AG04450 (cell line): ENCODE measurements at regions of chr12 and their contacts with region 1.

Region 1: DNA sequence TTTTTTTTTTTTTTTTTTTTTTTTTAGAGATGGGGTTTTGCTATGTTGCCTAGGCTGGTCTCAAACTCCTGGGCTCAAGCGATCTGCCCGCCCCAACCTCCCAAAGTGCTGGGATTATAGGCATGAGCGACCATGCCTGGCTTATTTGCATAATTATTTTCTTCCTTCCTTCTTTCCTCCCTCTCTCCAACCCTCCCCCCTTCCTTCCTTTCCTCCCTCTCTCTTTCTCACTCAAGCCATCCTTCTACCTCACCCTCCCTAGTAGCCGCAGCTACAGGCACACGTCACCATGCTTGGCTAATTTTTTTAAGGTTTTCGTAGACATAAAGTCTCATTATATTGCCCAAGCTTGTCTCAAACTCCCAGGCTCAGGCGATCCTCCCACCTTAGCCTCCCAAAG is 83.8 kb downstream of the PEBP1 start:
- DNase-seq: no peak
- H3K4me3 ChIP-seq: no peak overlapping the region
- H3K27ac ChIP-seq: no peak overlapping the region
- H3K27me3 ChIP-seq: no peaks in the 10 kb centered on the region
- CTCF ChIP-seq: no peak

Region 2: GRCh38 chr12:118377884-118378470 is 158.2 kb after region 1 on chr12:
- CTCF ChIA-PET with region 1: interaction called, 14 read pairs
- POLR2A ChIA-PET with region 1: interaction called, 3 read pairs
- DNase-seq: no peak
- H3K4me3 ChIP-seq: peak overlapping the region; percentile 91
- H3K27ac ChIP-seq: no peak overlapping the region
- H3K27me3 ChIP-seq: no peaks in the 10 kb centered on the region
- CTCF ChIP-seq: peak; percentile 89